Gastrocnemius medialis (tissue), 4 donors: ENCODE measurements at regions of chr7 and their contacts with region 1.

Region 1: DNA sequence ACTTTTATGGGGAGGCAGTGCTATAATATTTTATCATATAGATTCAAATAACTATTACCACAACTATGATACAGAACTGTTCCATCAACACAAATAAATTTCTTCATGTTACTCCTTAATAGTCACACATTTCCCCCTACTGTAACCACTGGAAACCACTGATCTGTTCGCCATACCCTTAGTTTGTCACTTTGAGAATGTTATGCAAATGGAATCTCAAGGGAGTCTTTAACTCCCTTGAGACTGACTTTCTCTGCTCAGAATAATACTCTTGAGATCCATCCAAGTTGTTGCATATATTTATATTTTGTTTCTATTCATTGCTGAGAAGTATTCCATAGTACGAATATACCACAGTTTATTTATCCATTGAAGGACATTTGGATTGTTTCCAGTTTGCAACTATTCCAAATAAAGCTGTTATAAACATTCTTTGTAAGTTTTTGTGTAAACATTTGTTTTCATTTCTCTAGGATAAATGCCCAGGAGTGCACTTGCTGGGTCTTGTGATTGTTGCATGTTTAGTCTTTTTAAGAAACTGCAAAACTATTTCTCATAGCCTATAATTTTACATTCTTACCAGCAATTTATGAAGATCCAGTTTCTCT is 19.7 kb upstream of the PON2 start:
- DNase-seq: no peak
- ATAC-seq: no peak
- H3K4me3 ChIP-seq: no peak overlapping the region
- H3K27ac ChIP-seq: no peak overlapping the region
- H3K4me1 ChIP-seq: no peaks in the 10 kb centered on the region
- H3K27me3 ChIP-seq: no peaks in the 10 kb centered on the region
- CTCF ChIP-seq: no peak
- POLR2A ChIP-seq: no peak

Region 2: DNA sequence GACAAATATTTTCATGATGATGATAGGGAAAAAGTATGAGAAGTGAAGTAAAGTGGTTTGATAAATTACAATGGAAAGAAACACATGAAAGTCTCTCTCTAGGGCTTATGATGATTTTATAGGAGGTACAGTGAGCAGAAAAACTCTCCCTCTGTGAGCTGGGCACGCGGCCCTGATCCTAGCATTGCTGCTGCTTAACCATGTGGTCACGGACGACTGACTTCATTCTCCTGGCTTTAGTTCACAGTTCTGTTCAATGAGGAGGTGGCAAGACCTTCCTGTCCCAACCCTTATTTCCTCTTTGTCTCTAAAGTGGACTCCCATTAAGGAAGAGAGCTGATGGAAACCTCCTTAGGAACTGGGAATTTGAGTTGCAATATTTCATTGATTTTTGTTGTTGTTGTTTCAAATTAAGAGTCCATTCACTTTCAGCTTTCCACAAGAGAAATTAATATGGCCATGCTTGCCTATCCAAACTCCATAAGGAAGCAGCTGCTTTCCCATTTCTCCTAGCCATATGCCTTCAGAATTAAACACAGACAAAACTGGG is 50.2 kb before region 1 on chr7:
- in situ Hi-C with region 1: loop called in 1 of 4 experiments (anchors 10 kb)
- intact Hi-C with region 1: no loop called
- DNase-seq: no peak
- ATAC-seq: no peak
- H3K4me3 ChIP-seq: no peak overlapping the region
- H3K27ac ChIP-seq: no peak overlapping the region
- H3K4me1 ChIP-seq: no peaks in the 10 kb centered on the region
- H3K27me3 ChIP-seq: no peaks in the 10 kb centered on the region
- CTCF ChIP-seq: no peak
- POLR2A ChIP-seq: no peak

Region 3: GRCh38 chr7:95577137-95577536 is 122.6 kb after region 1 on chr7:
- in situ Hi-C with region 1: no loop called
- intact Hi-C with region 1: no loop called
- DNase-seq: no peak
- ATAC-seq: no peak
- H3K4me3 ChIP-seq: no peak overlapping the region
- H3K27ac ChIP-seq: no peak overlapping the region
- H3K4me1 ChIP-seq: no peaks in the 10 kb centered on the region
- H3K27me3 ChIP-seq: no peaks in the 10 kb centered on the region
- CTCF ChIP-seq: no peak
- POLR2A ChIP-seq: no peak

Region 4: GRCh38 chr7:95700917-95701316 is 246.4 kb after region 1 on chr7:
- in situ Hi-C with region 1: no loop called
- intact Hi-C with region 1: no loop called
- DNase-seq: no peak
- ATAC-seq: no peak
- H3K4me3 ChIP-seq: no peak overlapping the region
- H3K27ac ChIP-seq: no peak overlapping the region
- H3K4me1 ChIP-seq: no peaks in the 10 kb centered on the region
- H3K27me3 ChIP-seq: no peaks in the 10 kb centered on the region
- CTCF ChIP-seq: no peak
- POLR2A ChIP-seq: no peak